Transverse colon (tissue), 4 donors: ENCODE measurements at regions of chr16 and their contacts with region 1.

Region 1: GRCh38 chr16:21184834-21185233 is 26.4 kb downstream of the LDAF1 start:
- DNase-seq: no peak
- H3K4me3 ChIP-seq: no peak overlapping the region
- H3K27ac ChIP-seq: no peak overlapping the region
- H3K4me1 ChIP-seq: peaks cover 3 to 11% (median 6%) of the 10 kb centered on the region in 4 donors
- H3K27me3 ChIP-seq: no peaks in the 10 kb centered on the region
- CTCF ChIP-seq: no peak
- EP300 ChIP-seq: no peak
- POLR2A ChIP-seq: no peak

Region 2: GRCh38 chr16:20976576-20976975 is 208.3 kb before region 1 on chr16:
- in situ Hi-C with region 1: no loop called
- intact Hi-C with region 1: no loop called
- DNase-seq: no peak
- H3K4me3 ChIP-seq: no peak overlapping the region
- H3K27ac ChIP-seq: no peak overlapping the region
- H3K4me1 ChIP-seq: no peaks in the 10 kb centered on the region
- H3K27me3 ChIP-seq: no peaks in the 10 kb centered on the region
- CTCF ChIP-seq: no peak
- EP300 ChIP-seq: no peak
- POLR2A ChIP-seq: no peak

Region 3: DNA sequence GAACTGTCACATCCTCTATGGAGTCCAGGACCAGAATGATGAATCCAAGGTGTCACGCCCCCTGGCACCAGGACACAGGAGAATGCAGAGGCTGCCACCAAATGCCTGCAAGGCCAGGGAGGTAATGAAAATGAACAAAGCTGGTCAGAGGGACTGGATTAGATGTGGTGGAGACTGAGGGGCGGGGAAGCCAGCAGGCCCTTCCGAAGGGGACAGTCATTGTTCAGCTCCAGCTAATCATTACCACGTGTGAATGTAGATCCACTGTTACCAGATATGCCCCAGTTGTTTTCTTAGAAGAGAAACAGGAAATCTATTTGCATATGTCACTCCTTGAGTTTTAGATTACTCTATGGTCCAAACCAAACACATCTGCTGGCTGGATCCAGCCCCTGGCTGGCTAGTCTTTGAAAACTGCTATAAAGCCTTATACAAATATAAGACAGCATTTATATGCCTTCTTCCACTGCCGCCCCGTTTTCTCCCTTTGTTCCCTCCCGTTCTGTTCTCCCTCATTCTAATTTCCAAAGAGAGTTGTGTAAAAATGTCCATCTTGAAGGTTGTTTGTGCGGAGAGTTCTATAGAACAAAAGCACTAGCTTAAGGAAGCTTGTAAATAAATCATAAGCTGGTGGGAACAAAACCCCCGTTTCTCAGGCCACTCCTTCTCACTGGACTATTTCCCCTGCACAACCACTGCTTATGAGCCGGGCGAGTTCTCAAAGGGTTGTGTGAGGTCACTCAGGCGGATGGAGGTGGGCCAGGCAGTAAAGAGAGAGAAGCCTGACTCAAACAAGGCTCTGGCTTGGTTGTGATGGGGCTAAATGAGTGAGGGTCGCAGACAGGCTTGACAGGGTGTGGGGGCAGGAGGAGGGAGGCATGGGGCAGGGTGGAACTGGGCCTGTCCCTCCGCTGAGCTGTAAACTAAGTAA is 79.1 kb after region 1 on chr16:
- in situ Hi-C with region 1: loop called in 1 of 4 experiments (anchors 10 kb)
- intact Hi-C with region 1: no loop called
- DNase-seq: peak; percentile 43
- H3K4me3 ChIP-seq: no peak overlapping the region
- H3K27ac ChIP-seq: peak overlapping the region; percentile 38 to 64 (median 58)
- H3K4me1 ChIP-seq: peaks cover 9 to 46% (median 27%) of the 10 kb centered on the region in 4 donors
- H3K27me3 ChIP-seq: no peaks in the 10 kb centered on the region
- CTCF ChIP-seq: no peak
- EP300 ChIP-seq: no peak
- POLR2A ChIP-seq: no peak

Region 4: DNA sequence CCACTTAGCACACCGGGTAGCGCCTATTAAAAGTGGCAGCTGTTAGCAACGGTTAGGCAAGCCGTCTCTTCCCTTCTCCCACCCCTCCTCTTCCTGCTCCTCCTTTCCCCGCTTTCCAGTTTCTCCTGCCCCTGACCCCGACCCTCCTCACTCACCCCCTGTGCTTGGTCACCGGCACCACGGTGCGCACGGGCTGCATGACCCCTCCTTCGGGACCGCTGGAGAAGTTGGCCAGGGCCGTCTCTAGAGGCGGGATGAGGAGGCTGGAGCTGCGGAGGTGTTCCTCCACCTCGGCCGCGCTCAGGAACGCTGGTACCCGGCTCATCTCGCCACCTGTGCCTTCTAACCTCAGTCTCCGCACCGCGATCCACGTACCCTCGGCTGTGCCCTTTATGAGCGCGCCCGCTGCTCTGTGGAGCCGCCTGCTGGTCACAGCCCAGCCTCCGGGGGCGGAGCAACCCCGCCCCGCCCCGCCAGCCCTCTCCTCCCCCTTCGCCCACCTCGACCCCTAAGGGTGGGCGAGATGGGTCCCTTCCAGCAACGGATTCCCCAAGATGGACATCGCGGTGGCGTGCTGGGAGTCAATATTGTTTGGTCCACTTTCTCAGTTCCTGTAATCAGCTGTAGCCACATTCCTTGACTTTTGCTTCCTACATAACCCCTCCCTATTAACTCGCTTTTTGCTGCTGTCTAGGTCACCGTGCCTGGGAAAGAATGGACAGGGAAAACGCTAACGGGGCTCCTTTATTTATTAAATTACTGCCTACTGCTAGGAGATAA is 93.3 kb after region 1 on chr16 and contains the start of gene CRYM:
- in situ Hi-C with region 1: loop called in 3 of 4 experiments (anchors 10 to 25 kb)
- intact Hi-C with region 1: no loop called
- DNase-seq: peak; percentile 80
- H3K4me3 ChIP-seq: peak within 1 kb of the TSS; percentile 35 to 62 (median 42)
- H3K27ac ChIP-seq: peak within 1 kb of the TSS in 3 of 4 donors; percentile 48 to 60 (median 59)
- H3K4me1 ChIP-seq: peaks cover 0 to 15% (median 5%) of the 10 kb centered on the region in 4 donors
- H3K27me3 ChIP-seq: peaks cover 28% of the 10 kb centered on the region
- CTCF ChIP-seq: peak; percentile 87 to 91 (median 88)
- EP300 ChIP-seq: no peak
- POLR2A ChIP-seq: no peak
- total RNA-seq, gene CRYM: 5.6 to 23.1 (median 18.3) TPM in 3 of 4 donors, not detected in the other

Region 5: GRCh38 chr16:21554795-21555585 is 370.2 kb after region 1 on chr16:
- in situ Hi-C with region 1: loop called in 1 of 4 experiments (anchors 10 kb)
- intact Hi-C with region 1: loop called (anchors 5 kb)
- DNase-seq: peak; percentile 94
- H3K4me3 ChIP-seq: peak overlapping the region in 1 of 4 donors; percentile 29
- H3K27ac ChIP-seq: no peak overlapping the region
- H3K4me1 ChIP-seq: peaks cover 3 to 9% (median 5%) of the 10 kb centered on the region in 4 donors
- H3K27me3 ChIP-seq: peaks cover 3% of the 10 kb centered on the region
- CTCF ChIP-seq: peak; percentile 98 to 100 (median 100)
- EP300 ChIP-seq: no peak
- POLR2A ChIP-seq: no peak

Region 6: GRCh38 chr16:21982108-21982507 is 797.3 kb after region 1 on chr16:
- in situ Hi-C with region 1: no loop called
- intact Hi-C with region 1: no loop called
- DNase-seq: no peak
- H3K4me3 ChIP-seq: no peak overlapping the region
- H3K27ac ChIP-seq: no peak overlapping the region
- H3K4me1 ChIP-seq: no peaks in the 10 kb centered on the region
- H3K27me3 ChIP-seq: no peaks in the 10 kb centered on the region
- CTCF ChIP-seq: no peak
- EP300 ChIP-seq: no peak
- POLR2A ChIP-seq: no peak